Endothelial cell of umbilical vein (primary cell): ENCODE measurements at regions of chr10 and their contacts with region 1.

Region 1: GRCh38 chr10:67520924-67521520 is 175.0 kb downstream of the CTNNA3 start:
- DNase-seq: peak; percentile 54
- H3K4me3 ChIP-seq: no peak overlapping the region
- H3K27ac ChIP-seq: no peak overlapping the region
- H3K4me1 ChIP-seq: no peaks in the 10 kb centered on the region
- H3K27me3 ChIP-seq: no peaks in the 10 kb centered on the region
- CTCF ChIP-seq: peak; percentile 63 to 65
- POLR2A ChIP-seq: no peak

Region 2: DNA sequence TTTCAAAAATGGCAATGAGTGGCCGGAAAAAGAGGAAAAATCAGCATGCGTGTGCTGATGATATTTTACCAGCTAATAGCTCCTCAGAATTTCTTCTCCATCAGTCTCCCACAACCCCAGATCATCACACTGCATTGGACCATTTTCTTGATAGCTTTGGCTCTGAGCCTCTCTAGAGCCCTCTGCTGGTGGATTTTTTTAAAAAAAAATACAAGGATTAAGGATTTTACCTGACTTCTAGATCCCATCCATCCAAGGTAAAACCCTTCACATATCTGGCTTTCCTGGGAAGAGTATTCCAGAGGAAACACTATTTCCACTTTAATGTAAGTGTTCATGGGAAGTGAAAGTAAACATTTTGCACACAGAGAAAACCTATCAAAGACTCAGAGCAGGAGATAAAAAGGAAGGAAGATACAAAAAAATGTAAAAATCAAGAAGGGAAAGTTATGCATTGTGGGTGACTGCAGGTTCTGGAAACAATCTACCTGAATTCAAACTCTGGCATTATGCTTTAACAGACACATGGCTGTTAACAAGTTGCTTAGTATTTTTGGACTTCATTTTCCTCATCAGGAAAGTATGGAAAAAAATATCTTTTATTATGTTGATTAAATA is 214.3 kb before region 1 on chr10:
- CTCF ChIA-PET with region 1: interaction called, 16 read pairs
- POLR2A ChIA-PET with region 1: no interaction called
- dilution Hi-C with region 1: no loop called
- intact Hi-C with region 1: loop called (anchors 2 kb)
- DNase-seq: peak; percentile 32
- H3K4me3 ChIP-seq: no peak overlapping the region
- H3K27ac ChIP-seq: no peak overlapping the region
- H3K4me1 ChIP-seq: no peaks in the 10 kb centered on the region
- H3K27me3 ChIP-seq: no peaks in the 10 kb centered on the region
- CTCF ChIP-seq: peak; percentile 43 to 47
- POLR2A ChIP-seq: no peak

Region 3: DNA sequence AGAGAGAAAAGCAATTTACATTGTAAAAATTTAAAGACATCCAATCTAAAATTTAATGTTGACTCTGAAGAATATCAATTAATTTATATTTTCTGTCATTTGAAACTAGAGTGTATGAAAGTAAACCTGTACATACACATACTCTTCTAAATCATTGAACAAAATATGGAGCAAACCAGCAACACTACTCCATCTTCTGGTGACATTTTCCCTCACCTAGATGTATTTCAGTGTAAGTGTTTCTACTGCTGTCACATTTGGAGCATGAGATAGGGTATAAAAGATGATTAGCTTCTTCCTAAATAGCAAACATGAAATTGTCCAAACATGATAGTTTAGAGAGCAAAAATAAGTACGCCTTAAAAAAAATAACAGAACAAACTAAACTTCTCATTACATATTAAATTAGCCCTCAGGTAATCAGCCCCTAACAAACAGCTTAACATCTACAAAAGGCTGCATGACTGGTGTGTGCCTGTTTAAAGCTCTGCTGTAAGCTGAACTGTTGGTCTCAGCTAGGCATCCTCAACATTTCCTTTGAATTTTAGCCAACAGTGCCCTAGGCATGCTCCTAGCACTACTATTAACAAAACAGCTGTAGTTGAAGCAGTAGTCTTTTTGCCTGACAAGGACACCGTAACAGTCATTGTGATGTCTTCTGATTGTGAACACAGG is 14.8 kb before region 1 on chr10:
- CTCF ChIA-PET with region 1: interaction called, 15 read pairs
- POLR2A ChIA-PET with region 1: no interaction called
- dilution Hi-C with region 1: no loop called
- intact Hi-C with region 1: no loop called
- DNase-seq: no peak
- H3K4me3 ChIP-seq: no peak overlapping the region
- H3K27ac ChIP-seq: no peak overlapping the region
- H3K4me1 ChIP-seq: no peaks in the 10 kb centered on the region
- H3K27me3 ChIP-seq: no peaks in the 10 kb centered on the region
- CTCF ChIP-seq: no peak
- POLR2A ChIP-seq: no peak

Region 4: DNA sequence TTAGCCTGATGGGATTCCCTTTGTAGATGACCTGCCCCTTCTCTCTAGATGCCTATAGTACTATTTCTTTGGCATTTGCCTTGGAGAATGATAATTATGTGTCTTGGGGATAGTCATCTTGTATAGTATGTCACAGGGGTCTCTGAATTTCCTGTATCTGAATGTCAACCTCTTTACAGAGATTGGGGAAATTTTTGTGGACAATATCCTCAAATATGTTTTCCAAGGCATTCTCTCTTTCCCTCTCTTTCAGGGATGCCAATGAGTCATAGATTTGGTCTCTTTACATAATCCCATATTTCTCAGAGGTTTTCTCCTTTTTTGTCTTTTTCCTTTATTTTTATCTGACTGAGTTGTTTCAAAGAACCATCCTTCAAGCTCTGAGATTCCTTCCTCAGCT is 75.6 kb after region 1 on chr10:
- CTCF ChIA-PET with region 1: no interaction called
- POLR2A ChIA-PET with region 1: no interaction called
- dilution Hi-C with region 1: no loop called
- intact Hi-C with region 1: no loop called
- DNase-seq: no peak
- H3K4me3 ChIP-seq: no peak overlapping the region
- H3K27ac ChIP-seq: no peak overlapping the region
- H3K4me1 ChIP-seq: no peaks in the 10 kb centered on the region
- H3K27me3 ChIP-seq: no peaks in the 10 kb centered on the region
- CTCF ChIP-seq: no peak
- POLR2A ChIP-seq: no peak

Region 5: GRCh38 chr10:67837541-67838314 is 316.7 kb after region 1 on chr10 and contains the start of gene DNAJC12:
- CTCF ChIA-PET with region 1: no interaction called
- POLR2A ChIA-PET with region 1: no interaction called
- dilution Hi-C with region 1: no loop called
- intact Hi-C with region 1: no loop called
- DNase-seq: peak; percentile 46
- H3K4me3 ChIP-seq: no peak within 1 kb of the TSS
- H3K27ac ChIP-seq: no peak within 1 kb of the TSS
- H3K4me1 ChIP-seq: no peaks in the 10 kb centered on the region
- H3K27me3 ChIP-seq: no peaks in the 10 kb centered on the region
- CTCF ChIP-seq: no peak
- POLR2A ChIP-seq: no peak
- total RNA-seq, gene DNAJC12: 1.0 and 2.4 TPM in 2 replicates